ENCODE measurements at regions of chr7 and their contacts with region 1.

Region 1: GRCh38 chr7:131327626-131328376 is at the start of gene MKLN1:
- DNase-seq: peak; percentile 68 to 95
- H3K4me3 ChIP-seq: peak within 1 kb of the TSS; percentile 72 to 93
- H3K27ac ChIP-seq: peak within 1 kb of the TSS; percentile 95 to 97
- H3K4me1 ChIP-seq: peaks cover 0 to 10% of the 10 kb centered on the region in 2 donors
- H3K27me3 ChIP-seq: no peaks in the 10 kb centered on the region
- CTCF ChIP-seq: no peak
- total RNA-seq, gene MKLN1: 18.0 TPM

Region 2: GRCh38 chr7:130982160-130982638 is 345.6 kb before region 1 on chr7:
- intact Hi-C with region 1: no loop called
- DNase-seq: no peak
- H3K4me3 ChIP-seq: no peak overlapping the region
- H3K27ac ChIP-seq: peak overlapping the region in 1 of 2 donors; percentile 6
- H3K4me1 ChIP-seq: peaks cover 0 to 26% of the 10 kb centered on the region in 2 donors
- H3K27me3 ChIP-seq: no peaks in the 10 kb centered on the region
- CTCF ChIP-seq: peak in 2 of 3 experiments; percentile 39 to 54

Region 3: GRCh38 chr7:131040467-131040932 is 287.3 kb before region 1 on chr7:
- intact Hi-C with region 1: no loop called
- DNase-seq: no peak
- H3K4me3 ChIP-seq: no peak overlapping the region
- H3K27ac ChIP-seq: peak overlapping the region; percentile 31 to 50
- H3K4me1 ChIP-seq: peaks cover 4 to 20% of the 10 kb centered on the region in 2 donors
- H3K27me3 ChIP-seq: no peaks in the 10 kb centered on the region
- CTCF ChIP-seq: peak; percentile 80 to 87 (median 84)

Region 4: GRCh38 chr7:131235489-131236317 is 92.1 kb before region 1 on chr7:
- intact Hi-C with region 1: loop called (anchors 5 kb)
- DNase-seq: peak; percentile 48 to 86
- H3K4me3 ChIP-seq: no peak overlapping the region
- H3K27ac ChIP-seq: no peak overlapping the region
- H3K4me1 ChIP-seq: no peaks in the 10 kb centered on the region
- H3K27me3 ChIP-seq: no peaks in the 10 kb centered on the region
- CTCF ChIP-seq: no peak